T-cell (primary cell): ENCODE measurements at regions of chr2 and their contacts with region 1.

Region 1: DNA sequence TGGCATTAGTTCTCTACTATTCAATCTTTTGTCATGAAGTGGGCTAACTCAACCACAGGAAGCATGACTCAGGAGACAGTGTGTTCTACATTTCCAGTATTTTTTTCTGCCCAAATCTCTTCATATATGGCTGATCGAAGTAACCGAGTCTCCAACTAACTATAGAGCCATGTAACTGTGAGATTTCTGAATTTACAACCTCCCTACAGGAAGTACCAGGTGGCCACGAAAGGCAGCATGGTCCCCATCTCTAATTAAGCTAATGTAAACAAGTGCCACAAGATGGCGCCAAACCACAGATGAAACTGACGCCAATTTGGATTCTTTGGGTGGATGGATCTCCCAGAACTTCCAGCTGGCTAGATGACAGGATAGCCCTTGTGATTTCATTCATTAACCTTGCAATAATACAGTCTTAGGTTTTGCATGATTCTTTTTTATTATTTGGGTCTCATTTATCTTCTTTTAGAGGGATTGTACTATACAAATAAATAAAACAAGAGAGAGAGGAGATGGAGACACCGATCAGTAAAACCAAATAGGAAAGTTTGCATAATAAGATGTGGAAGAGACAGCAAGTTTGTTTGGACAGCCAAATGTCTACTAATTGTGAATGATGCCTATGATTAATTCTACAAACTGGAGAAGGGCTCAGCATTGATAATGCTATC is 18.3 kb upstream of the ARHGAP15 start:
- DNase-seq: peak; percentile 13 to 89 (median 56)
- ATAC-seq: peak; percentile 78 to 87 (median 83)
- H3K4me3 ChIP-seq: no peak overlapping the region
- H3K4me3 Mint-ChIP-seq: peak overlapping the region; percentile 9 to 49 (median 20)
- H3K27ac ChIP-seq: peak overlapping the region; percentile 31
- H3K27ac Mint-ChIP-seq: peak overlapping the region; percentile 85 to 91
- H3K4me1 ChIP-seq: peaks cover 6 to 10% of the 10 kb centered on the region in 2 experiments
- H3K4me1 Mint-ChIP-seq: peaks cover 28 to 31% (median 29%) of the 10 kb centered on the region in 3 donors
- H3K27me3 ChIP-seq: no peaks in the 10 kb centered on the region
- H3K27me3 Mint-ChIP-seq: peaks cover 0 to 2% of the 10 kb centered on the region in 2 donors

Region 2: GRCh38 chr2:142545036-142545435 is 565.9 kb before region 1 on chr2:
- CTCF ChIA-PET with region 1: no interaction called
- POLR2A ChIA-PET with region 1: no interaction called
- DNase-seq: no peak
- ATAC-seq: no peak
- H3K4me3 ChIP-seq: no peak overlapping the region
- H3K4me3 Mint-ChIP-seq: no peak overlapping the region
- H3K27ac ChIP-seq: no peak overlapping the region
- H3K27ac Mint-ChIP-seq: no peak overlapping the region
- H3K4me1 ChIP-seq: no peaks in the 10 kb centered on the region
- H3K4me1 Mint-ChIP-seq: no peaks in the 10 kb centered on the region
- H3K27me3 ChIP-seq: no peaks in the 10 kb centered on the region
- H3K27me3 Mint-ChIP-seq: no peaks in the 10 kb centered on the region

Region 3: DNA sequence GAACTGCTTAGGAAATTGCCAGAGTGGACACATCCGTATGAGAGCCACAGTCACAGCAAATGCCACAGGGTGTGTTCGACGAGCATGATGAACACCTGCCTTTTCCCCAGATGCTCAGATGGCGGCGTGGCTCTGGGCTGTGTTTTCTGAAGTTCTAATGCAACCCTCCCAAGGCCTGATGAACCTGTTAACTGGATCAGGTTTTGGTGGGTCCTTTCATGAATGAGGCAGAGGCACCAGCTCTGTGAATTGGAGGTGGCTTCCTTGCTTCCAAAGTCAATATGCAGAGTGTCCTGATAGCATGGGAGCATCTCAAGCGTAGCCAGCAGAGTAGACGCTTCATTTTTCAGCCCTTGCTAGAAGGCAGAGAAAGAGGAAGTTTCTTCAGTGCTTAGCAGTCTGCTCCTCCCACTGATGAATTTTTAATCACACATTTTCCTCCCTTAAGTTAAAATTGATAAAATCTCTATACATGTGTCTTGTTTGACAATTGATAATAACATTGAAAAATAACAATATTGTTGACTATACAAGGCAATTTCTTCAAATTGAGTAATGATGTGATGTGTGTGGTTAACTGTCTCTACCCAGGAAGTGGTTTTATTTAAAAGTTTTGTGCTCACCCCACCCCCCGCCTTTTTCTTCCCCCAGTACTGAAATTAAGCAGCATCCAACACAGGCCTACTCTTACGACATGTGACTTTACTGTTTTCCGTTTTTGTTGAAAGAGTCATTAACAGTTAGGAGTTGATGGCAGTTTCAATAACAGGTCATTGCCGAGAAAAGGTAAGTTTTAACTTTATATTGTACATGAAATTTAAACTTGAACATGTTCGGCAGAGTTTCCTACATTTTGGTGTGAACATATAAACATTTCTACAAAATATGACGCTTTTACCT is 18.0 kb after region 1 on chr2 and contains the start of gene ARHGAP15:
- CTCF ChIA-PET with region 1: interaction called, 5 to 35 read pairs
- POLR2A ChIA-PET with region 1: interaction called in 1 of 2 experiments, 5 read pairs
- DNase-seq: peak; percentile 42 to 88 (median 76)
- ATAC-seq: peak; percentile 88 to 91 (median 90)
- H3K4me3 ChIP-seq: peak within 1 kb of the TSS; percentile 49 to 58
- H3K4me3 Mint-ChIP-seq: peak within 1 kb of the TSS; percentile 79 to 82 (median 80)
- H3K27ac ChIP-seq: peak within 1 kb of the TSS; percentile 89
- H3K27ac Mint-ChIP-seq: peak within 1 kb of the TSS; percentile 90 to 100
- H3K4me1 ChIP-seq: peaks cover 43 to 71% of the 10 kb centered on the region in 2 experiments
- H3K4me1 Mint-ChIP-seq: peaks cover 39 to 54% (median 49%) of the 10 kb centered on the region in 3 donors
- H3K27me3 ChIP-seq: no peaks in the 10 kb centered on the region
- H3K27me3 Mint-ChIP-seq: no peaks in the 10 kb centered on the region
- total RNA-seq, gene ARHGAP15: 154 to 271 (median 188) TPM

Region 4: GRCh38 chr2:143162123-143162837 is 51.4 kb after region 1 on chr2:
- CTCF ChIA-PET with region 1: interaction called, 14 to 68 read pairs
- POLR2A ChIA-PET with region 1: no interaction called
- DNase-seq: peak in 34 of 35 experiments; percentile 37 to 83 (median 61)
- ATAC-seq: peak; percentile 90 to 99 (median 94)
- H3K4me3 ChIP-seq: no peak overlapping the region
- H3K4me3 Mint-ChIP-seq: no peak overlapping the region
- H3K27ac ChIP-seq: peak overlapping the region; percentile 3
- H3K27ac Mint-ChIP-seq: peak overlapping the region; percentile 82 to 90
- H3K4me1 ChIP-seq: peaks cover 12 to 28% of the 10 kb centered on the region in 2 experiments
- H3K4me1 Mint-ChIP-seq: peaks cover 89 to 95% (median 90%) of the 10 kb centered on the region in 3 donors
- H3K27me3 ChIP-seq: no peaks in the 10 kb centered on the region
- H3K27me3 Mint-ChIP-seq: no peaks in the 10 kb centered on the region

Region 5: GRCh38 chr2:143217512-143218115 is 106.7 kb after region 1 on chr2:
- CTCF ChIA-PET with region 1: interaction called, 24 to 73 read pairs
- POLR2A ChIA-PET with region 1: interaction called in 1 of 2 experiments, 11 read pairs
- DNase-seq: no peak
- ATAC-seq: peak in 2 of 4 experiments; percentile 16 to 17
- H3K4me3 ChIP-seq: no peak overlapping the region
- H3K4me3 Mint-ChIP-seq: no peak overlapping the region
- H3K27ac ChIP-seq: no peak overlapping the region
- H3K27ac Mint-ChIP-seq: peak overlapping the region; percentile 84 to 89
- H3K4me1 ChIP-seq: peaks cover 0 to 4% of the 10 kb centered on the region in 2 experiments
- H3K4me1 Mint-ChIP-seq: peaks cover 61 to 68% (median 66%) of the 10 kb centered on the region in 3 donors
- H3K27me3 ChIP-seq: no peaks in the 10 kb centered on the region
- H3K27me3 Mint-ChIP-seq: no peaks in the 10 kb centered on the region

Region 6: GRCh38 chr2:143230506-143231253 is 119.8 kb after region 1 on chr2:
- CTCF ChIA-PET with region 1: interaction called in 1 of 2 experiments, 73 read pairs
- POLR2A ChIA-PET with region 1: no interaction called
- DNase-seq: no peak
- ATAC-seq: no peak
- H3K4me3 ChIP-seq: no peak overlapping the region
- H3K4me3 Mint-ChIP-seq: no peak overlapping the region
- H3K27ac ChIP-seq: no peak overlapping the region
- H3K27ac Mint-ChIP-seq: peak overlapping the region; percentile 30 to 48
- H3K4me1 ChIP-seq: no peaks in the 10 kb centered on the region
- H3K4me1 Mint-ChIP-seq: peaks cover 25 to 27% (median 27%) of the 10 kb centered on the region in 3 donors
- H3K27me3 ChIP-seq: no peaks in the 10 kb centered on the region
- H3K27me3 Mint-ChIP-seq: no peaks in the 10 kb centered on the region